ENCODE measurements at regions of chrX and their contacts with region 1.

Region 1: DNA sequence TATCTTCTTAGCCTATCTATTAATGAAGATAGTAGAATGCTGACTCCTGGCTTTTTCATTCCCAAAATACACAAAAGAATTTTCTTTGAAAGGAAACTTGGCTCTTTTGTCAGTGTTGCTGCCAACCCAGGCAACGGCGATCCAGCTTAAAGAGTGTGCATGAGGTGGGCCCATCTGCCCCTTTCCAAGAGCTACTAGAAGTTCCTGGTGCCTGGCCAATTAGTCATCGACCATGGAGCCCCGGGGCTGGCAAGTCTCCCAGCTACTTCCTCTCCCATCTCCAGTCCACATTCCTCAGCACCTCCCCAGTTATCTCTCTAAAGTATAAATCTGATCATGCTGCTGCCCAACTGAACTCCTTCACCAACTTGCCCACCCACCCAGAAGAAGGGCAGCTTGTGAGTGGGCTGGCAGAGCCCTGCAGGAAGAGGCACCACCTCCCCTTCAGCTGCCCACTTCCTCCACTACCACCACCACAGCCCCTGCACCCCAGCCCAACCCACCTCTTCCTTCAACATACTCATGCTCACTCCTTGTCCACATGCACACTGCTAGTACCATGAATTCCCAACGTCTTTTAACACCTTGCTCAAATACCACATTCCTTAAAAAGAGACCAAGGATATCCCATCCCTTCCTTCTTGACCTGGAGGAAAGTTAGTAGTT is 158.2 kb upstream of the MAP3K15 start:
- DNase-seq: no peak
- ATAC-seq: no peak
- H3K4me3 ChIP-seq: no peak overlapping the region
- H3K4me3 Mint-ChIP-seq: peak overlapping the region; percentile 1
- H3K27ac ChIP-seq: peak overlapping the region in 1 of 2 experiments; percentile 48
- H3K27ac Mint-ChIP-seq: peak overlapping the region; percentile 77
- H3K4me1 ChIP-seq: peaks cover 21% of the 10 kb centered on the region
- H3K4me1 Mint-ChIP-seq: peaks cover 60% of the 10 kb centered on the region
- H3K27me3 ChIP-seq: no peaks in the 10 kb centered on the region
- H3K27me3 Mint-ChIP-seq: no peaks in the 10 kb centered on the region
- CTCF ChIP-seq: no peak

Region 2: GRCh38 chrX:19659925-19660324 is 13.6 kb before region 1 on chrX:
- CTCF ChIA-PET with region 1: interaction called, 3 read pairs
- POLR2A ChIA-PET with region 1: no interaction called
- intact Hi-C with region 1: loop called in 1 of 2 experiments (anchors 2 kb)
- DNase-seq: no peak
- ATAC-seq: no peak
- H3K4me3 ChIP-seq: no peak overlapping the region
- H3K4me3 Mint-ChIP-seq: no peak overlapping the region
- H3K27ac ChIP-seq: no peak overlapping the region
- H3K27ac Mint-ChIP-seq: no peak overlapping the region
- H3K4me1 ChIP-seq: no peaks in the 10 kb centered on the region
- H3K4me1 Mint-ChIP-seq: peaks cover 49% of the 10 kb centered on the region
- H3K27me3 ChIP-seq: no peaks in the 10 kb centered on the region
- H3K27me3 Mint-ChIP-seq: no peaks in the 10 kb centered on the region
- CTCF ChIP-seq: no peak

Measured in CD8-positive, alpha-beta T cell (primary cell).